Endothelial cell of umbilical vein (primary cell): ENCODE measurements at regions of chr5 and their contacts with region 1.

Region 1: GRCh38 chr5:88826646-88827585 is 56.1 kb downstream of the MEF2C start:
- DNase-seq: peak; percentile 99
- H3K4me3 ChIP-seq: peak overlapping the region in 1 of 3 experiments; percentile 37
- H3K27ac ChIP-seq: peak overlapping the region; percentile 94
- H3K4me1 ChIP-seq: peaks cover 64% of the 10 kb centered on the region
- H3K27me3 ChIP-seq: no peaks in the 10 kb centered on the region
- CTCF ChIP-seq: no peak
- POLR2A ChIP-seq: peak; percentile 73

Region 2: GRCh38 chr5:88647901-88648300 is 179.0 kb before region 1 on chr5:
- CTCF ChIA-PET with region 1: no interaction called
- POLR2A ChIA-PET with region 1: no interaction called
- dilution Hi-C with region 1: no loop called
- intact Hi-C with region 1: no loop called
- DNase-seq: no peak
- H3K4me3 ChIP-seq: no peak overlapping the region
- H3K27ac ChIP-seq: no peak overlapping the region
- H3K4me1 ChIP-seq: no peaks in the 10 kb centered on the region
- H3K27me3 ChIP-seq: peaks cover 0 to 3% of the 10 kb centered on the region in 2 experiments
- CTCF ChIP-seq: no peak
- POLR2A ChIP-seq: no peak

Region 3: DNA sequence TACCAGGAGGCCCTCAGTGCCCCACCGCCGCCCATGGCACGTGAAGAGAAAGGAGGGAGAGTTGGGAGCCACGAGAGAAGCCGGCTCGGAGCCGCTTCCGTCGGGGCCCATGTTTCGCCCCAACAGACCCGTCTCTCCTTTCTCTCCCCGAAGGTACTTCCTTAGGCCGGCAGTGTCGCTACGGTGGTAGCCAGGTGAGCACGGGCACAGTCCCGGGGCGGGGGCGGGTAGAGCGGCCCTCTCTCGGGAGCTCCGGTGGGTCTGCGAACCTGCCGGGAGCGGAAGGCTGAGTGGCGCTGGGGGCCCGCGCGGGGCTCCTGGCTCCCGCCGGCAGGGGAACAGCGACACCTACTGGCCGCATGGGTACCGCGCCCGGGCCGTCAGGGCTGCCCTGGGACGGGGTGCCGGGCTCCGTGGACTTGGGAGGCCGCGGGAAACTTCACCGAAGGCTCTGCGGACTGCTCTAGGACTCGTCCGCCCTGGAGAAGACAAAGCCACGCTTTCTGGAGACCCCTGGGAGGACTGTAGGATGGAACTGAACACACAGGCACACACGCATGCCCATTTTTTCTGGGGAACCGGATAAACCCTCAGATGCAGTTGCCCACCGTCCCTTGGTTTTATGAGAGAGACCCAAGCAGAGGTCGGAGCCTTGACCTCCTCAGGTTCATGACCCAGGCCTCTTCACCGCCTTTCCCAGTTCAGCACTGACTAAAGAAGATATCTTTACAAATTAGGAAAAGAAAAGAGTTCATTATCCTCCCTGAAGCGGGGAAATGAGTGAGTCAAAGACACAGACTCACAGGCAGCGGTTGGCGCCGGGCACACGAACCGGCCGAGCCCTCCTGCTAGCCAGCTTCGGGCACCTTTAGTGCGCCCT is 146.4 kb before region 1 on chr5:
- CTCF ChIA-PET with region 1: no interaction called
- POLR2A ChIA-PET with region 1: no interaction called
- dilution Hi-C with region 1: no loop called
- intact Hi-C with region 1: no loop called
- DNase-seq: peak; percentile 37
- H3K4me3 ChIP-seq: peak overlapping the region in 1 of 3 experiments; percentile 34
- H3K27ac ChIP-seq: no peak overlapping the region
- H3K4me1 ChIP-seq: peaks cover 8% of the 10 kb centered on the region
- H3K27me3 ChIP-seq: peaks cover 83 to 99% of the 10 kb centered on the region in 2 experiments
- CTCF ChIP-seq: peak; percentile 90 to 97
- POLR2A ChIP-seq: no peak

Region 4: GRCh38 chr5:88785391-88786219 is 41.3 kb before region 1 on chr5:
- CTCF ChIA-PET with region 1: interaction called, 6 read pairs
- POLR2A ChIA-PET with region 1: interaction called, 3 read pairs
- dilution Hi-C with region 1: no loop called
- intact Hi-C with region 1: loop called (anchors 1 kb)
- DNase-seq: peak; percentile 96
- H3K4me3 ChIP-seq: peak overlapping the region in 1 of 3 experiments; percentile 46
- H3K27ac ChIP-seq: peak overlapping the region; percentile 97
- H3K4me1 ChIP-seq: peaks cover 33% of the 10 kb centered on the region
- H3K27me3 ChIP-seq: no peaks in the 10 kb centered on the region
- CTCF ChIP-seq: no peak
- POLR2A ChIP-seq: no peak

Region 5: DNA sequence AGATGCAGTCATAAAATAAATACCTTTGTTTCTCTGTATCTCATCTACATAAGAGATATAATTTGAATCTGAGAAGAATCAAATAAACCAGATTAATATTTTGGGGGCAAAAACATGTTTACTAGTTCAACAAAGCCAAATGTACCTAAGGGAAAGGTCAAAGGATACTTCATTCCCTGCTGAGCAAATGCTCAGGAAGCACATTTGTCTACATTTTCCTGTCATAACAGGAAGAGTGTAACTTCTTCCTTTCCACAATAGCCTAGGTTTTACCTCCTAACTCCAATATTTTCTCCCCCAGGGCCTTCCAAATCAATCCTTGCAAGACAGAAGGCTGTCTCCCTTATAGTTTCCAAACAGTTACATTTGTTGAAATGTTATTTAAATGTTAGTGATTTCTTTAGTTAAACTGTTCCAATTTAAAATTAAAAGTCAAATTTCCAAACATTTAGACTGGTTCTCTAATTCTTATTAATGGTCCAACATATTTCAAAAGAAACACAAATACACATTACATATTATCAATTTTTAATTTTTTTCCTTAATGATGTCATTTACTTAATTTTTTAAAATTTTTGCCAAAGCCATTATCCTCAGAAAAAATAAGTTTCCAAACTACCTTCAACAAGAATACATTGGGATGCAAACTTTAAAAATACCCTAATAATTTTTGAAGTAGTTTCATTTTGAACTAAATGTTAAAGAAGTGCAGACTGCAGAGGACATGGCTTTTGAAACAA is 11.7 kb before region 1 on chr5:
- CTCF ChIA-PET with region 1: interaction called, 5 read pairs
- POLR2A ChIA-PET with region 1: no interaction called
- dilution Hi-C with region 1: no loop called
- intact Hi-C with region 1: loop called (anchors 1 kb)
- DNase-seq: peak; percentile 82
- H3K4me3 ChIP-seq: no peak overlapping the region
- H3K27ac ChIP-seq: peak overlapping the region; percentile 70
- H3K4me1 ChIP-seq: peaks cover 25% of the 10 kb centered on the region
- H3K27me3 ChIP-seq: no peaks in the 10 kb centered on the region
- CTCF ChIP-seq: no peak
- POLR2A ChIP-seq: no peak

Region 6: GRCh38 chr5:88860501-88860900 is 33.6 kb after region 1 on chr5:
- CTCF ChIA-PET with region 1: no interaction called
- POLR2A ChIA-PET with region 1: no interaction called
- dilution Hi-C with region 1: no loop called
- intact Hi-C with region 1: no loop called
- DNase-seq: no peak
- H3K4me3 ChIP-seq: no peak overlapping the region
- H3K27ac ChIP-seq: no peak overlapping the region
- H3K4me1 ChIP-seq: no peaks in the 10 kb centered on the region
- H3K27me3 ChIP-seq: no peaks in the 10 kb centered on the region
- CTCF ChIP-seq: no peak
- POLR2A ChIP-seq: no peak

Region 7: DNA sequence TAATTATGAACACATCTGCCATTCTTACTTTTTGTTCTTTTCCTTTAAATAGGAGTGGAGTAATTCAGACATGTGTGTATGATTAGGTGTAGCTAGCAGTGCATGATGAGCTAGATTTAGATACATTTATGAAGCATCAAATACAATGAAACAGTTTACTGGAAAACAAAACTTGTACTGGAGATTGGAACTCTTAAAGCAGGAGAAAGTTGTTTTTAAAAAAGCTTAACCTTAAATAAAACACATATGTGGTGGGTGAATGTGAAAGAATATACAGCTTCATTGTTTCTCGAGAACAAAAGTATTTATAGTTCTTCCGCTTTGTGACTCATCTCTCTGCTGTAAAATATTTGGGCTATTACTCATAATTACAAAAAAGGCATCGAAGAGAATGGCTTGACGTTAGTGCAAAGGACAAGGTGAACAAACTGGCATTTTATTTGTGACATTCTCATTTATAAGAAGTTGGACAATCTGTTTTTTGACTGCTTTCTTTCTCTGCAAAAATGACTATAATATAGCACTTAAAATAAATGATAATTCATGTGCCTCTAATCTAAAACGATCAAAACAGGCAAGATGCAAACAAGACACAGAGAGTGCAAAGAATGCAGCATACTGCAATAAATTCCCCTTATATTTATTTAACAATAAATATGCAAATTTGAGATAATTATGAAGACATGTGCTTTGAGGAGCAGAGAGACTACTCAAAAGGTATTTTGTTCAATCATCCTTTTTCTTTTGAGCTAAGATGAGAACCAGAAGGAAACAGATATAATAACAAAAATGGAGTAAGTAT is 1103.9 kb after region 1 on chr5:
- CTCF ChIA-PET with region 1: no interaction called
- POLR2A ChIA-PET with region 1: no interaction called
- dilution Hi-C with region 1: no loop called
- intact Hi-C with region 1: loop called (anchors 5 kb)
- DNase-seq: peak; percentile 88
- H3K4me3 ChIP-seq: peak overlapping the region in 1 of 3 experiments; percentile 21
- H3K27ac ChIP-seq: peak overlapping the region; percentile 97
- H3K4me1 ChIP-seq: peaks cover 29% of the 10 kb centered on the region
- H3K27me3 ChIP-seq: no peaks in the 10 kb centered on the region
- CTCF ChIP-seq: no peak
- POLR2A ChIP-seq: no peak